ENCODE measurements at regions of chr17 and their contacts with region 1.

Region 1: GRCh38 chr17:43338886-43339516 is 59.8 kb upstream of the ARL4D start:
- DNase-seq: peak; percentile 59 to 82
- H3K4me3 ChIP-seq: no peak overlapping the region
- H3K27ac ChIP-seq: no peak overlapping the region
- H3K4me1 ChIP-seq: peaks cover 0 to 5% of the 10 kb centered on the region in 2 donors
- H3K27me3 ChIP-seq: no peaks in the 10 kb centered on the region
- CTCF ChIP-seq: peak; percentile 35 to 73 (median 61)
- POLR2A ChIP-seq: no peak

Region 2: GRCh38 chr17:42843358-42843934 is 495.6 kb before region 1 on chr17:
- intact Hi-C with region 1: loop called (anchors 10 kb)
- DNase-seq: no peak
- H3K4me3 ChIP-seq: no peak overlapping the region
- H3K27ac ChIP-seq: no peak overlapping the region
- H3K4me1 ChIP-seq: no peaks in the 10 kb centered on the region
- H3K27me3 ChIP-seq: no peaks in the 10 kb centered on the region
- CTCF ChIP-seq: peak; percentile 45 to 93 (median 76)
- POLR2A ChIP-seq: no peak

Region 3: GRCh38 chr17:43018008-43018853 is 320.8 kb before region 1 on chr17:
- intact Hi-C with region 1: loop called (anchors 10 kb)
- DNase-seq: no peak
- H3K4me3 ChIP-seq: peak overlapping the region in 1 of 3 donors; percentile 8
- H3K27ac ChIP-seq: peak overlapping the region; percentile 45 to 65
- H3K4me1 ChIP-seq: no peaks in the 10 kb centered on the region
- H3K27me3 ChIP-seq: no peaks in the 10 kb centered on the region
- CTCF ChIP-seq: no peak
- POLR2A ChIP-seq: no peak

Measured in breast epithelium (tissue), 4 donors.